Naive thymus-derived CD4-positive, alpha-beta T cell (primary cell): ENCODE measurements at regions of chr3 and their contacts with region 1.

Region 1: GRCh38 chr3:69324362-69325025 is 61.4 kb downstream of the FRMD4B start:
- DNase-seq: no peak
- ATAC-seq: peak; percentile 47
- H3K4me3 ChIP-seq: no peak overlapping the region
- H3K4me3 Mint-ChIP-seq: peak overlapping the region in 1 of 10 donors; percentile 41
- H3K27ac ChIP-seq: no peak overlapping the region
- H3K27ac Mint-ChIP-seq: peak overlapping the region in 6 of 9 donors; percentile 2 to 75 (median 66)
- H3K4me1 ChIP-seq: peaks cover 0 to 17% of the 10 kb centered on the region in 2 donors
- H3K4me1 Mint-ChIP-seq: peaks cover 19 to 49% (median 45%) of the 10 kb centered on the region in 7 donors
- H3K27me3 ChIP-seq: no peaks in the 10 kb centered on the region
- H3K27me3 Mint-ChIP-seq: no peaks in the 10 kb centered on the region

Region 2: DNA sequence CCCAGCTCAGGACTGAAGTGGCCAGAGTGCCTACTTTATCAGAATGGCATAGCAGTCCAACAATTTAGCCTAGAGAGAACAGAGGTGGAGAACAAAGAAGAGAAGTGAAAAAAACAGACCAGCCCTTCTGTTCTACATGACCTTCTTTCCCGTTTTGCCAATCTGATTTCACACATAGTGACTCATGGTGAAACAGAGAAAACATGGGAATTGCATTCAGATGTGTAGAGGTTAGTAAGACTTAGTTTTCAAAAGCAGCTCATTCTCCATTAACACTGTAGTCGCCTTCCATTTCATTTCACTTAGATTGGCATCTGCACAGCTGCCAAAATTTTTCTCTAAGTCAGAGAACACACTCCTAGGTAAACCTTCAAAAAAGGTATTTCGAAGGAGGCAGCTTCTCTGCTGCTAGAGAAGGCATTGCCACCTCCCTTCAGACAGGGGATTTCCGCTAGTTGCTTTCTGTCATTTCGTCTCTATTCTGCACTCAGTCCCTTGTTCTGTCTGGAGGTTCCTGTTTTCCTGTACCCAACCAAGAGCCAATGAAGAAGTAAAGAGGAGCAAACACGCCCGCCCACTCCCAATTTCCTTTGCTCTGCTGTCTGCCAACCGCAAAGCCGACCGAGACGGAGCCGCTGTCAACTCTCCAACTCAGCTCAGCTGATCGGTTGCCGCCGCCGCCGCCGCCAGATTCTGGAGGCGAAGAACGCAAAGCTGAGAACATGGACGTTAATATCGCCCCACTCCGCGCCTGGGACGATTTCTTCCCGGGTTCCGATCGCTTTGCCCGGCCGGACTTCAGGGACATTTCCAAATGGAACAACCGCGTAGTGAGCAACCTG is 239.9 kb before region 1 on chr3 and contains the start of gene ARL6IP5:
- CTCF ChIA-PET with region 1: no interaction called
- POLR2A ChIA-PET with region 1: no interaction called
- intact Hi-C with region 1: loop called in 1 of 2 experiments (anchors 2 kb)
- DNase-seq: peak; percentile 71 to 95 (median 93)
- ATAC-seq: peak; percentile 84
- H3K4me3 ChIP-seq: peak within 1 kb of the TSS; percentile 89
- H3K4me3 Mint-ChIP-seq: peak within 1 kb of the TSS; percentile 88 to 99 (median 97)
- H3K27ac ChIP-seq: peak within 1 kb of the TSS; percentile 76
- H3K27ac Mint-ChIP-seq: peak within 1 kb of the TSS; percentile 92 to 99 (median 98)
- H3K4me1 ChIP-seq: peaks cover 58% of the 10 kb centered on the region in 2 donors
- H3K4me1 Mint-ChIP-seq: peaks cover 44 to 72% (median 62%) of the 10 kb centered on the region in 7 donors
- H3K27me3 ChIP-seq: no peaks in the 10 kb centered on the region
- H3K27me3 Mint-ChIP-seq: no peaks in the 10 kb centered on the region
- total RNA-seq, gene ARL6IP5: 75.8 to 226 (median 119) TPM

Region 3: DNA sequence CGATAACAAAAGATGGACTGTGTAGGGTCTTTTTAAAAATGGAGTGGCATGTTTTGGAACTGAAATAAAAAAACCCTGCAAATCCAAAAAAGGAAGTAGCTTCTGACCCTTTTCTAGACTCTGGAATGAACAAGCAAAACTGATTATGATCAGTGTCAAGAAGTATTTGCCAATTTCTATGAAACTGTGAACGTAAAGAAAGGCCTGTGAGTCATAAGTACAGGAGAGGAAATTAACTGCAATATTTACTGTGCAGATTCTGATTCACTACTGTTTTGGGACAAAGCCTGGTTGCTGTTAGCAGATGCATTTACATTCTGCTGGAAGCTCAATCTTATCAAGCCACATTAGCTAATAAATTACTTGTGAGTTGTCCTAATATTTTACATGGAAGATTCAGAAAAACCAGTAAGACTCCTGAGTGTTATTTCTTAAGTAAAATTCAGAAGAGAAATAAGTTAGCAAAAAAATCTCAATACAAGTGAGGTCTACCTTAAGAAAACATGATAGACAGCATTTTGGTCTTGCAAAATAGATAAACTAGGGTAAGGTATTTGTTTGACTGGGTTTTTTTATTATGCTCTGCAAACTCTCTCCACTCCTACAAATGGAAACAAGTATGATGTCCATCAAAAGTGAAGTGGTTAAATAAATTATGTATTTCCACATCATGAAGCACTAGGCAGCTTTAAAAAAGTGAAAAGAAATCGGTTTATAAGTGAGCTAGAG is 111.9 kb before region 1 on chr3:
- CTCF ChIA-PET with region 1: no interaction called
- POLR2A ChIA-PET with region 1: no interaction called
- intact Hi-C with region 1: loop called in 1 of 2 experiments (anchors 1 kb)
- DNase-seq: no peak
- ATAC-seq: peak; percentile 82
- H3K4me3 ChIP-seq: no peak overlapping the region
- H3K4me3 Mint-ChIP-seq: peak overlapping the region in 1 of 10 donors; percentile 67
- H3K27ac ChIP-seq: no peak overlapping the region
- H3K27ac Mint-ChIP-seq: peak overlapping the region in 3 of 9 donors; percentile 25 to 85 (median 29)
- H3K4me1 ChIP-seq: peaks cover 0 to 6% of the 10 kb centered on the region in 2 donors
- H3K4me1 Mint-ChIP-seq: peaks cover 0 to 50% (median 0%) of the 10 kb centered on the region in 7 donors
- H3K27me3 ChIP-seq: no peaks in the 10 kb centered on the region
- H3K27me3 Mint-ChIP-seq: no peaks in the 10 kb centered on the region

Region 4: GRCh38 chr3:69410250-69410649 is 85.8 kb after region 1 on chr3:
- CTCF ChIA-PET with region 1: no interaction called
- POLR2A ChIA-PET with region 1: no interaction called
- intact Hi-C with region 1: loop called in 1 of 2 experiments (anchors 1 kb)
- DNase-seq: peak; percentile 9 to 60 (median 46)
- ATAC-seq: peak; percentile 93
- H3K4me3 ChIP-seq: no peak overlapping the region
- H3K4me3 Mint-ChIP-seq: no peak overlapping the region
- H3K27ac ChIP-seq: no peak overlapping the region
- H3K27ac Mint-ChIP-seq: no peak overlapping the region
- H3K4me1 ChIP-seq: no peaks in the 10 kb centered on the region
- H3K4me1 Mint-ChIP-seq: peaks cover 1 to 10% (median 5%) of the 10 kb centered on the region in 7 donors
- H3K27me3 ChIP-seq: no peaks in the 10 kb centered on the region
- H3K27me3 Mint-ChIP-seq: peaks cover 0 to 3% (median 0%) of the 10 kb centered on the region in 5 donors

Region 5: GRCh38 chr3:69439643-69440270 is 115.3 kb after region 1 on chr3:
- CTCF ChIA-PET with region 1: no interaction called
- POLR2A ChIA-PET with region 1: no interaction called
- intact Hi-C with region 1: loop called in 1 of 2 experiments (anchors 1 kb)
- DNase-seq: peak in 1 of 9 donors; percentile 1
- ATAC-seq: peak; percentile 27
- H3K4me3 ChIP-seq: no peak overlapping the region
- H3K4me3 Mint-ChIP-seq: peak overlapping the region in 1 of 10 donors; percentile 14
- H3K27ac ChIP-seq: no peak overlapping the region
- H3K27ac Mint-ChIP-seq: peak overlapping the region in 1 of 9 donors; percentile 36
- H3K4me1 ChIP-seq: no peaks in the 10 kb centered on the region
- H3K4me1 Mint-ChIP-seq: peaks cover 0 to 16% (median 0%) of the 10 kb centered on the region in 7 donors
- H3K27me3 ChIP-seq: no peaks in the 10 kb centered on the region
- H3K27me3 Mint-ChIP-seq: no peaks in the 10 kb centered on the region